ENCODE measurements at regions of chr19 and their contacts with region 1.

Region 1: DNA sequence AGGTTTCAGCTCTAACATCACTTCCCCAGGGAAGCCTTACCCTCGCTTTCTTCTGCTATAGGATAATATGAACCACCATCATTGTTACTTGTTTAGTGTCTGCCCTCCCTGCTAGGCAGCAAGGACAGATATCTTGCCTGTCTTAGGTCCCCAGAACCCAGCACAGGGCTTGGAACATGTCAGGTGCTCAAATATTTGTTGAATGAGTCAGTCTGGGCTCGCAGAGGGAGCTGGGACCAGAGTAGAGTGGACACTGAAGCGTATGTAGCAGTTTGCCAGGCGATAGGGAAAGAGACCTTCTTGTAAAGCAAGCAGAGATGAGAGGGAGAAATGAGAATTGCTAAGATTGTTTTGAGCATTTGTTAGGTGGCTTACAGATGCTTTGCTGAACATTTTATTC is 11.7 kb downstream of the BCKDHA start:
- H3K4me3 ChIP-seq: no peak overlapping the region
- H3K27ac ChIP-seq: no peak overlapping the region
- H3K4me1 ChIP-seq: peaks cover 5% of the 10 kb centered on the region; the same call in 1 of the 2 replicates
- CTCF ChIP-seq: no peak

Region 2: DNA sequence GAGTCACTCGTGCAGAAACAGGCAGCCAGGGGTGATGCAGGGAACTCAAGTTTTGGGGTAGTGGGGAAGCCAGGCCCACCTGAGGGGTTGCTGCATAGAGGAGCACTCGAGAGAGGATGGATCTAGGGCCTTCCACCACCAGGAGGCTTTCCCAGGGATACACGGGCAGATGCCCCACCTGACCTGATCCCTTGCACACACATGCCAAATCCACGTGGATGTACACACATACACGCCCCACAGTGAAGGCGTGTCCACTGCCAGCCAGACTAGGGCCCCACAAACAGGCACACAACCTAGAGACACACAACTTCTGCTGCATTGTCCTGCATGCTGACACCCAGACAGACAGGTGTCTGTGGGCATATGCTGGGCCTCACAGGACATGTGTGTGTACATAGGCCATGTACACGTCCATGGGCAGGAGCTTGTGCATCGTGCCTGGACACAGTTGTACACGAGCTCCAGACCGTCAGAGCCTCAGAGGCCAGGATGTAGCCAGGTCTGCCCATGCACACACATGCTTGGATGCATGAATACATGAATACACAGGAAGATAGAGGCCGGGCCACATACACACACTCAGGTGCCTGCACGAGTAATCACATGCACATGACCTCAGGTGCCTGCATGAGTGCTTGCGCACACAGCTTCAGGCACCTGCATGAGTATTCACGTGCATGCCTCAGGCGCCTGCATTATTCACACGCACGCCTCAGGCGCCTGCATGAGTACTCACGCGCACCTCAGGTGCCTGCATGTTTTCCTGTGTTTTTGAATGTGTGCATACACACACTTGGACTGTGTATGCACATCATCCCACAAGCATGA is 90.4 kb before region 1 on chr19:
- CTCF ChIA-PET with region 1: no interaction called
- POLR2A ChIA-PET with region 1: no interaction called
- H3K4me3 ChIP-seq: no peak overlapping the region
- H3K27ac ChIP-seq: no peak overlapping the region
- H3K4me1 ChIP-seq: peaks cover 11% of the 10 kb centered on the region
- CTCF ChIP-seq: no peak

Region 3: GRCh38 chr19:41426952-41427646 is 17.8 kb after region 1 on chr19 and contains the start of gene B3GNT8:
- CTCF ChIA-PET with region 1: interaction called, 4 read pairs
- POLR2A ChIA-PET with region 1: interaction called, 10 read pairs
- H3K4me3 ChIP-seq: no peak within 1 kb of the TSS
- H3K27ac ChIP-seq: peak within 1 kb of the TSS; percentile 64
- H3K4me1 ChIP-seq: peaks cover 13% of the 10 kb centered on the region
- CTCF ChIP-seq: no peak